Prostate gland (tissue), 2 donors: ENCODE measurements at regions of chr20 and their contacts with region 1.

Region 1: DNA sequence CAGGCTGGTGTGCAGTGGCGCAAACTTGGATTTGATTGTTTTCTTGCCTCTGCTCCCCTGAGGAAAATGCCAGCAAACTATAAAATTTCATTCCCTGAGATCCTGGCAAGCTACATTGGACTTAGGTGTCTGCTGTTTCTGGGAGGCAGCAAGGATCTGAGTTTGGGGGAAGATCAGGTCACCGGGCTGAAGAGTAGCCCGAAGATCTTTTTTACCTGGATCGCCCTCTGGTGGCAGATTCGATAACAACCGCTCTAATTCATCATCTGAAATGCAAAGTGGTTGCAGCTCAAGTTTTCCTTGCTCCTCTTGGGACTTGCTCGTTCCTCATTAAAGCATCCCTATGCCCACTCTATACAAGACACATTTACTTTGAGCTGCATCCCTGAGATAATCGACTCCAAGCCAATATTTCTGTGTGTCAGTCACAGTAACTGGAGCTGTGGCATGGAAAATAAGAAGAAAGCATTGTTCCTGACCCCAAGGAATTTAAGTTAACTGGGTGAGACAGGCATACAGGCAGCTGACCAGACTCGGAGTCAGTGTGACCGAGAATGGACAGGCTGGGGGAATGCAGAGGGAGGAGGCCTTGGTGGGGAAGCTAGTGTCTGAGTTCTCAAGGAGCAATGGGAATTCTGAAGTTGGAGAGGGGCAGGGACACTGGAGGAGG is 131.8 kb upstream of the PROKR2 start:
- DNase-seq: peak; percentile 47
- H3K4me3 ChIP-seq: no peak overlapping the region
- H3K27ac ChIP-seq: no peak overlapping the region
- H3K4me1 ChIP-seq: no peaks in the 10 kb centered on the region
- H3K27me3 ChIP-seq: no peaks in the 10 kb centered on the region
- CTCF ChIP-seq: peak; percentile 34 to 53 (median 50)
- POLR2A ChIP-seq: no peak

Region 2: DNA sequence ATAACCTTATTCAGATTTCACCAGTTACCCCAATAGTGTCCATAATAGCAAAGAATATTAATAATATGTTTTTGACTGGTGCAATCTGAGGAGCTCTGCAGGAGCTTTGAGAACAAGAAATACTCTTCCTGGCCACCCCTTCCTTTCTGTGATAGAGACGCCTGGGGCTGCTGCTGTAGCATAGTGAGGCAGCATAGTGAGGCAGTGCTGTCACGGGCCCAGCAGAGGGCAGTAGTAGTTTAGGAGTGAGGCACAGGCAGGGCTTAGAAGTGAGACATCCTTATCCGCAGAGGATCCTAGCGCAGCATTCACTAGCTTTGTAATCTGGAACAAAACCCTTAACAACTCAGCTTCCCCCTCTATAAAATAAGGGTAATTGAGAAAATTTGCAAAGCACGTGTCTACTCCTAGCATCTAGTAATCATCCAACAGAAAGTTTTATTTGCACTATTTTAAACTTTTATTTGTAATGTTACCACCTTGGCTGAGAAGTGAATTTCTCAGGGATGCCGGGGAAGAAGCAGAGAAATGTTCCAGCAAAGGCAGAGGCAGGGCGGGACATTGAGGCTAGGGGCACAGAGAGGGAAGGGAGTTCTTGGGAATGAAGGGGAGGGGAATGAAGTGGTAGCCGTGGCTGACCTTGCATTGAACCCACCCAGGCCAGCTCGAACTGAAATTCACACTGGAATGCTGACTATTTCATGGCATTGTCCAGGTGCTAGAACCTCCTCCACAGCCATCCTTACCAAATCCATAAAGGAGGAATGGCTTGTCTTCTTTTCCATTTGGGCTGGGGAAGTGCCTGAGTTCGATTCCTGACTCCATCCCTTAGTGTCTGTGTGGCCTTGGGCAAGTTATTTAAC is 243.0 kb before region 1 on chr20:
- intact Hi-C with region 1: loop called (anchors 2 kb)
- DNase-seq: peak; percentile 60
- H3K4me3 ChIP-seq: no peak overlapping the region
- H3K27ac ChIP-seq: no peak overlapping the region
- H3K4me1 ChIP-seq: no peaks in the 10 kb centered on the region
- H3K27me3 ChIP-seq: no peaks in the 10 kb centered on the region
- CTCF ChIP-seq: peak; percentile 18 to 75 (median 68)
- POLR2A ChIP-seq: no peak